Heart right ventricle (tissue), 16 donors: ENCODE measurements at regions of chrX and their contacts with region 1.

Region 1: DNA sequence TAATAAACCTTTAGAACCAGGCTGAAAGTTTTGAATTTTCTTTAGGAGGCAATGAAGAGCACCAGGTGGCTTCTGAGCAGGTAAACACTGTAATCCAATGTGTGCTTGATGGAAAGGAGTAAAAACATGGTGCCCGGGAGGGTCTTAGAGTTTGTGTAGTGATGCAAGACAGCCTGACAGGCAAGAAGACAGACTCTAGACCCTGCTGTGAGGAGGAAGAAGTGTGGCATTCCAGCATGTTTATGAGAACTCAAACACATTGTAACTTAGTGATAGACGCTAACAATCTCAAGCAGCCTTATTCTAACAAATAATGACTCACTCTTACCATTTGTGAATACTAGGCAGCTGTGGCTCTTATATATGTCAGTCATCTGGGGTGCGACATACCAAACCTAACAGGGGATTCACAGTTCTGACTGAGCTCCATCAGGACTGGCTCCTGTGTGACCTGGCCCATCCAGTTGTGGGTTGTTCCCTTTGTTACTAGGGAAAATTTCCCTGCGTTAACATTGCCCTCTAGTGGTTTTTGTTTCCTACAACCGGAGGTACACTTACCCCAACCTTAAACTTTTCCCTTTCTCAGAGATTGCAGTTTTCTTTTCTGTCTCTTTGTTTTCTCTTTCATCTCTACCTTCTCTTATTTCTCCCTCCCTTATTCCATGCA is 53.8 kb downstream of the VSIG4 start:
- DNase-seq: peak in 1 of 2 donors; percentile 46
- ATAC-seq: peak; percentile 78 to 89 (median 85)
- H3K4me3 ChIP-seq: no peak overlapping the region
- H3K27ac ChIP-seq: peak overlapping the region in 1 of 10 donors; percentile 72
- H3K4me1 ChIP-seq: peaks cover 0 to 28% (median 0%) of the 10 kb centered on the region in 9 donors
- H3K27me3 ChIP-seq: peaks cover 0 to 35% (median 0%) of the 10 kb centered on the region in 7 donors
- CTCF ChIP-seq: peak; percentile 30 to 69 (median 58)

Region 2: GRCh38 chrX:65750674-65751469 is 235.2 kb before region 1 on chrX:
- intact Hi-C with region 1: loop called in 3 of 10 experiments (anchors 10 kb)
- DNase-seq: no peak
- ATAC-seq: no peak
- H3K4me3 ChIP-seq: no peak overlapping the region
- H3K27ac ChIP-seq: no peak overlapping the region
- H3K4me1 ChIP-seq: peaks cover 0 to 18% (median 0%) of the 10 kb centered on the region in 9 donors
- H3K27me3 ChIP-seq: peaks cover 0 to 53% (median 0%) of the 10 kb centered on the region in 7 donors
- CTCF ChIP-seq: no peak